Pancreas (tissue), 10 donors: ENCODE measurements at regions of chr19 and their contacts with region 1.

Region 1: DNA sequence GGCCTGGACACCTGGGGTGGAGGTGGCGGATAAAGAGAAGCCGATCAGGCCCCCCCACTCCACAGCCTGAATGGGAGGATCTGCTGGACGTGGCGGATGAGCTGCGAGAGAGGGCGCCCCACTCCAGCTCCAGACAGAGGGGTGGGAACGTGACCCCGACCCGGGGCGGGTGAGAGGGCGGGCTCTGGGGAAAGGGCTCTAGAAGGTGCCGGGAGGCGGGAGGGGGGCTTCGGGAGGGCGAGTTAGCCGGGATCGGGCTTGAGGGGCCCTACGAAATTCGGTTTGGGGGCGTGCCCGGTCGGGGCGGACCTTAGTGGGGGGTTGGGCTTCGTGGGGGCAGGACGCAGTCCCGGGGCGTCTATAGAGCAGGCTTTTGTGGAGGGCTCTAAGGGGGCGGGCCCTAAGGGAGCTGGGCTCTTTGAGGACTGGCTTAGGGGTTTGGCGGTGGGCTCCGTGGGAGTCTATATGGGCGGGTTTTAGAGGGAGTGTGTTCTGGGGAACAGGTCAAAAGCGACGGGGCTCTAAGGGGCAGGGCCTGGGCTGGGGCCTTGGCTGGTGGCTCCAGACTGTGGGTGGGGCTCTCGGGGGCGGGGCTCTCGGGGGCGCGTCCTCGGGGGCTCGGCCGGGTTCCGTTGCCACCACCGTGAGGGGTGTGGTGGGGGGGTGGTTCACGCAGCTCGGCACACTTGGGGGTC is 4.1 kb upstream of the NANOS3 start:
- DNase-seq: peak in 4 of 6 donors; percentile 46 to 74 (median 64)
- ATAC-seq: peak; percentile 66 to 89 (median 67)
- H3K4me3 ChIP-seq: peak overlapping the region; percentile 3 to 43 (median 26)
- H3K27ac ChIP-seq: no peak overlapping the region
- H3K4me1 ChIP-seq: no peaks in the 10 kb centered on the region
- H3K27me3 ChIP-seq: no peaks in the 10 kb centered on the region
- CTCF ChIP-seq: no peak

Region 2: DNA sequence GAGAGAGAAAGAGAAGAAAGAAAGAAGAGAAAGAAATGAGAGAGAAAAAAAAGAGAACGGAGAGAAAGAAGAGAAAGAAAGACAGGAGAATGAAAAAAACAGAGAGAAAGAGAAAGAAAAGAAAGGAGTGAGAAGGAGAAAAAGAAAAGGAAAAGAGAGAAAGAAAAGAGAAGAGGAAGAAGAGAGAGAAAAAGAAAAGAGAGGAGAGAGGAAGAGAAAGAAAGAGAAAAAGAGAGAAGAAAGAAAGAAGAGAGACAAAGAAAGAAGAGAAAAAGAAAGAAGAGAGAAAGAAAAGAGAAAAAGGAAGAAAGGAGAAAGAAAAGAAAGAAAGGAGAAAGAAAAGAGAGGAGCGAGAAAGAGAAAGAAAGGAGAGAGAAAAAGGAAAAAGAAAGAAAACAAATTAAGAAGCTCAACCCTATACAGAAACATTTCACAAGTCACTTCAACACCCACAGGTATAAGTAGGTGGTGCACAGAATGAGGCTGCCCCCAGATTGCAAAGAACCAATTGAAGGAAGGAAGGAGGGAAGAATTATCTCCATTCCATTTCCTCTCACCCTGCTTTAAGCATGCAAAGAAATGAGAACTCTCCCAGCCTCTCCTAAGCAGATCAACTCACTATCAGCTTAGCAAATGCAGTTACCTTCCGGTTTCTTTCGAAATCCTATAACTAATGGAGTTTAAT is 267.8 kb before region 1 on chr19:
- intact Hi-C with region 1: loop called in 1 of 3 experiments (anchors 10 kb)
- DNase-seq: no peak
- ATAC-seq: no peak
- H3K4me3 ChIP-seq: no peak overlapping the region
- H3K27ac ChIP-seq: no peak overlapping the region
- H3K4me1 ChIP-seq: no peaks in the 10 kb centered on the region
- H3K27me3 ChIP-seq: no peaks in the 10 kb centered on the region
- CTCF ChIP-seq: no peak